Activated B cell treated with CpG ODN at 0.5 μM for 24 hours (primary cell): ENCODE measurements at regions of chr2 and their contacts with region 1.

Region 1: DNA sequence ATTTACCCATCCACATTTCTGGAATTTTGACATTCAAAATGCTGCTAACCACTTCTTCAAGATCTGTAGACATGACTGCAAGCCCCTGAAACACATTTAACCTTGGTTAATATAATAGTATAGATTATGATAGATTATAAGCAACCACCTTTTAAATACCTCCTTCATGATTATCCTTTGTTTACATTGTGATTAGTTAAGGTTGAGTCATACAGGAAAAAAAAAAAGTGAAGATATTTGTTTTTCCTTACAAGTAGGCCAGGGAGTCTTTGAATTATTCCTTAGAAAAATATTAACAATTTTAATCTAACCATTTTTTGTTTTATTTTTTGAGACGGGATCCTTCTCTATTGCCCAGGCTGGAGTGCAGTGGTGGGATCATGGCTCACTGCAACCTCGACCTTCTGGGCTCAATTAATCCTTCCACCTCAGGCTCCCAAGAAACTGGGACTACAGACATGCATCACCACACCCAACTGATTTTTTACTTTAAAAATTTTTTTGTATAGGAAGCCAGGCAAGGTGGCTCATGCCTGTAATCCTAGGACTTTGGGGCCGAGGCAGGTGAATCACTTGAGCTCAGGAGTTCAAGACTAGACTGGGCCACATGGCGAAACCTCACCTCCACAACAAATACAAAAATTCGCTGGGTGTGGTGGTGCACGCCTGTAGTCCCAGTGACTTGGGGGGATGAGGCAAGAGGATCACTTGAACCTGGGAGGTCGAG is 99.3 kb downstream of the SLC39A10 start:
- DNase-seq: no peak
- ATAC-seq: no peak
- H3K4me3 Mint-ChIP-seq: no peak overlapping the region
- H3K27ac Mint-ChIP-seq: no peak overlapping the region
- H3K4me1 Mint-ChIP-seq: no peaks in the 10 kb centered on the region
- H3K27me3 Mint-ChIP-seq: no peaks in the 10 kb centered on the region
- CTCF ChIP-seq: no peak

Region 2: DNA sequence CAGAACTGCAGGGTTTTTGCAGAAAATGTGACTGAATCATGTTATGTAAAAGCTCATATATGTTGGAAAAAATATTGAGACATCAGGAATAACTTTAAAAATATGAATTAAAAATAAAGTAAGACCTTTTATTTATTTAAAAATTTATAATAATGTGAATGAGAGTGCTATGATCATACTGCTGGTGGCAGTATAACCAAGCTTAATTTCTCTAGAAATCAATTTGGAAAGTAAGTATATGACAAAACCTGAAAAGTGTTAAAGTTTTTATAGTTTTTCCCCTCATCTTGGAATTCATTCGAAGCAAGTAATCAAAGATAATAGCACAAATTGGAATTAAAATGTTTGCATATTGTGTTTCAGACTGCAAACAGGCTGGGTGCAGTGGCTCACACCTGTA is 91.8 kb before region 1 on chr2:
- CTCF ChIA-PET with region 1: no interaction called
- POLR2A ChIA-PET with region 1: no interaction called
- intact Hi-C with region 1: no loop called
- DNase-seq: no peak
- ATAC-seq: no peak
- H3K4me3 Mint-ChIP-seq: no peak overlapping the region
- H3K27ac Mint-ChIP-seq: peak overlapping the region; percentile 66
- H3K4me1 Mint-ChIP-seq: peaks cover 60% of the 10 kb centered on the region
- H3K27me3 Mint-ChIP-seq: no peaks in the 10 kb centered on the region
- CTCF ChIP-seq: no peak

Region 3: GRCh38 chr2:195737173-195738043 is 19.0 kb before region 1 on chr2:
- CTCF ChIA-PET with region 1: no interaction called
- POLR2A ChIA-PET with region 1: interaction called, 10 read pairs
- intact Hi-C with region 1: no loop called
- DNase-seq: no peak
- ATAC-seq: no peak
- H3K4me3 Mint-ChIP-seq: no peak overlapping the region
- H3K27ac Mint-ChIP-seq: no peak overlapping the region
- H3K4me1 Mint-ChIP-seq: peaks cover 2% of the 10 kb centered on the region
- H3K27me3 Mint-ChIP-seq: no peaks in the 10 kb centered on the region
- CTCF ChIP-seq: no peak

Region 4: DNA sequence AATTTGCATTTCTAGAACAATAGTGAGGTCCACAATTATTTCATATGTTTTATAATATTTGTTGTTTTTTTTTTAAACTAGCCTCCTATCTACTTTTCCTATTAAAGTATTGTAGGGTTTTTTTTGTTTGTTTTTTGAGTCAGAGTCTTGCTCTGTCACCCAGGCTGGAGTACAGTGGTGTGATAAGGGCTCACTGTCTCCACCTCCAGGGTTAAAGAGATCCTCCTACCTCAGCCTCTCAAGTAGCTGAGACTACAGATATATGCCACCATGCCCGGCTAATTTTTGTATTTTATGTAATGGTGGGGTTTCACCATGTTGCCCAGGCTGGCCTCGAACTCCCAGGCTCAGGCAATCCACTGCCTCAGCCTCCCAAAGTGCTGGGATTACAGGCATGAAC is 23.1 kb after region 1 on chr2:
- CTCF ChIA-PET with region 1: no interaction called
- POLR2A ChIA-PET with region 1: no interaction called
- intact Hi-C with region 1: no loop called
- DNase-seq: no peak
- ATAC-seq: no peak
- H3K4me3 Mint-ChIP-seq: no peak overlapping the region
- H3K27ac Mint-ChIP-seq: no peak overlapping the region
- H3K4me1 Mint-ChIP-seq: no peaks in the 10 kb centered on the region
- H3K27me3 Mint-ChIP-seq: no peaks in the 10 kb centered on the region
- CTCF ChIP-seq: no peak